CD4-positive, alpha-beta T cell (primary cell): ENCODE measurements at regions of chr19 and their contacts with region 1.

Region 1: GRCh38 chr19:44093931-44094765 is at the start of gene ZNF224:
- DNase-seq: peak; percentile 62 to 92 (median 74)
- ATAC-seq: peak; percentile 88
- H3K4me3 ChIP-seq: peak within 1 kb of the TSS; percentile 91
- H3K4me3 Mint-ChIP-seq: peak within 1 kb of the TSS; percentile 96
- H3K27ac ChIP-seq: peak within 1 kb of the TSS; percentile 30 to 79
- H3K27ac Mint-ChIP-seq: peak within 1 kb of the TSS; percentile 69
- H3K4me1 ChIP-seq: peaks cover 6% of the 10 kb centered on the region
- H3K4me1 Mint-ChIP-seq: peaks cover 24% of the 10 kb centered on the region
- H3K27me3 ChIP-seq: no peaks in the 10 kb centered on the region
- H3K27me3 Mint-ChIP-seq: no peaks in the 10 kb centered on the region
- CTCF ChIP-seq: no peak
- total RNA-seq, gene ZNF224: 21.3 to 23.9 TPM

Region 2: DNA sequence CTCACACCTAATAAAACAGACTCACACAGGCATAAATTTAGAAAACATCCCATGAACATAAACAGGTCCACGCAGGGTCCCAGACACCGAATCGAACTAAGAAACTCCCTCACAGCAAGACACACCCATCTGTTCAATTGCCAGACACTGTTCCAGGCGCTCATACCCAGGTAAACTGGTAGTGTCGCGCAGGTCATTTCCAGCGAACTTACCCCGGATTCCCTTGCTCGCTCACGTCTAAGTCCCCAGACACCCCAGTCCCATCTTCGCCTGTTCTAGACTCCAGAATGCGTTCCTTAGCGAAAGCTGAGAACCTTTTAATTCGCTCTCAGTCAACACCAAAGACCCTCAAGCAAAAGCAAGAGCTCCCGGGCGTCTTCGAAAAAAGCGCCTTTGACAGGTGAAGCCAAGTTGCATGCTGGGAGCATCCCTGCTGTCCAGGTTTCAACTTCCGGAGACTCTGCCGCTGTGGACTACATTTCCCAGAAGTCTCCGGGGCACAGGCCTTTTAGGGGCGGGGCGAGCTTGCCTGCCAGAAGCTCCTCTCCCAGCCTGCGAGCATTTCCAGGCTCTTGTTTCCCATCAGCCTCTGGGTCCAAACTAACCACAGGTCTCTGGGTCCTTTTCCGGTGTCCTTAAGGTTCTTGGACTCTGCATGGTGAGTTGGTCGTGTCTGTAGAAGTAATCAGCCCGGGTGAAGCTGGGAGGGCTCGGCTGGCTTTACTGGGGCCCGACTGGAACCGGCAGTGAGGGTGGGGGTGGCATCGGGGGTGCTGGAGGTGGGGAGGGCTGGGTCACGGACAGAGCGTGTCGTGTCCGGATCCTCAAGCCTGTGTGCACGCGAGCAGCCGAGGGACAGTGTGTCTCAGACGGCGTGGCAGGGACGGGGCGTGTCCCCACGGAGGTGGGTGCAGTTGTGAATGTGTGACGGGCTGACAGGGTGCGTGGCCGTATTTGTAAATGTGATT is 267.1 kb before region 1 on chr19 and contains the start of gene ZNF283:
- CTCF ChIA-PET with region 1: no interaction called
- POLR2A ChIA-PET with region 1: no interaction called
- intact Hi-C with region 1: loop called in 1 of 2 experiments (anchors 5 kb)
- DNase-seq: peak; percentile 63 to 89 (median 79)
- ATAC-seq: peak; percentile 95
- H3K4me3 ChIP-seq: peak within 1 kb of the TSS; percentile 77
- H3K4me3 Mint-ChIP-seq: peak within 1 kb of the TSS; percentile 84
- H3K27ac ChIP-seq: no peak within 1 kb of the TSS
- H3K27ac Mint-ChIP-seq: peak within 1 kb of the TSS; percentile 12
- H3K4me1 ChIP-seq: peaks cover 16% of the 10 kb centered on the region
- H3K4me1 Mint-ChIP-seq: peaks cover 18% of the 10 kb centered on the region
- H3K27me3 ChIP-seq: no peaks in the 10 kb centered on the region
- H3K27me3 Mint-ChIP-seq: peaks cover 14% of the 10 kb centered on the region
- CTCF ChIP-seq: no peak
- total RNA-seq, gene ZNF283: 2.3 to 3.7 TPM

Region 3: GRCh38 chr19:43983912-43984686 is 110.0 kb before region 1 on chr19 and contains the start of gene ZNF155:
- CTCF ChIA-PET with region 1: no interaction called
- POLR2A ChIA-PET with region 1: no interaction called
- intact Hi-C with region 1: loop called in 1 of 2 experiments (anchors 5 kb)
- DNase-seq: peak; percentile 39 to 88 (median 56)
- ATAC-seq: peak; percentile 88
- H3K4me3 ChIP-seq: peak within 1 kb of the TSS; percentile 85
- H3K4me3 Mint-ChIP-seq: peak within 1 kb of the TSS; percentile 97
- H3K27ac ChIP-seq: peak within 1 kb of the TSS in 1 of 2 donors; percentile 72
- H3K27ac Mint-ChIP-seq: peak within 1 kb of the TSS; percentile 83
- H3K4me1 ChIP-seq: peaks cover 16% of the 10 kb centered on the region
- H3K4me1 Mint-ChIP-seq: peaks cover 22% of the 10 kb centered on the region
- H3K27me3 ChIP-seq: no peaks in the 10 kb centered on the region
- H3K27me3 Mint-ChIP-seq: no peaks in the 10 kb centered on the region
- CTCF ChIP-seq: no peak
- total RNA-seq, gene ZNF155: 3.5 to 4.0 TPM

Region 4: DNA sequence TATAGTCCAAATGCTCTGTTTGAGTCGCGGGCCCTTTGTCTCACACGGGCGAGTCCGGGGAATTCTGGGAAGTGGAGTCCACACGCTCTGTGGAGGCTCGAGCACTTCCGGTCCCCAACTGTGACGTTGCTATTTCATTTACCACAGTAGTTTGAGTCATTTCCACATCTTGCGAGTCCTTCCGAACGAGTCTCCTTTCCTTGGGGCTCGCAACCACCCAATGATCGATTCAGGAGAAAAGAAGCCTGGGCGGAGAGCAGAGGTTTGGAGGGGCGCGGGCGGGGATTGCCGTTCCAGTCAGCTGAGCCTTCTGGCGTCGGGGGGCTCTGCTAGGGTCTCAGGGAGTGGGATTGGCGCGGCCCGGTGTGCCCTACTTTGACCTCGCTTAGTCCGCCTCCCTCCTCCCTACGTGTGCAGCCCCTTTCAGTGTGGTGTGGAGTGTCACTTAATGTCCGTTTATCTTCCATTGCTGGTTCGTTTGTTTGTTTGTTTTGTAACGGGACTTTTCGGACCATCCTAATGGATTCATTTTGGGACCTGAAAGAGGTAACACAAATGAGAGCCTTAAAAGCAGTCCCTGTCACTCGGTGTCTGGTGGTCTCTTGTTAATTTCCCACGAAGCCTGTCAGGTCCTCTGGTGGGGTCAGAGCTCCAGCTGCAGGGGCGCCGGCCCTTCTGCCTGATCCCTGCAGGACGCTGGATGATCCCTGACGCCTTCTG is 68.8 kb before region 1 on chr19 and contains the start of gene ZNF222:
- CTCF ChIA-PET with region 1: no interaction called
- POLR2A ChIA-PET with region 1: no interaction called
- intact Hi-C with region 1: loop called in 1 of 2 experiments (anchors 2 kb)
- DNase-seq: peak; percentile 53 to 90 (median 70)
- ATAC-seq: peak; percentile 97
- H3K4me3 ChIP-seq: peak within 1 kb of the TSS; percentile 79
- H3K4me3 Mint-ChIP-seq: peak within 1 kb of the TSS; percentile 98
- H3K27ac ChIP-seq: no peak within 1 kb of the TSS
- H3K27ac Mint-ChIP-seq: peak within 1 kb of the TSS; percentile 88
- H3K4me1 ChIP-seq: peaks cover 14% of the 10 kb centered on the region
- H3K4me1 Mint-ChIP-seq: peaks cover 30% of the 10 kb centered on the region
- H3K27me3 ChIP-seq: no peaks in the 10 kb centered on the region
- H3K27me3 Mint-ChIP-seq: peaks cover 9% of the 10 kb centered on the region
- CTCF ChIP-seq: no peak
- total RNA-seq, gene ZNF222: 4.5 to 5.8 TPM

Region 5: GRCh38 chr19:44061038-44061437 is 33.1 kb before region 1 on chr19:
- CTCF ChIA-PET with region 1: no interaction called
- POLR2A ChIA-PET with region 1: no interaction called
- intact Hi-C with region 1: no loop called
- DNase-seq: no peak
- ATAC-seq: no peak
- H3K4me3 ChIP-seq: no peak overlapping the region
- H3K4me3 Mint-ChIP-seq: no peak overlapping the region
- H3K27ac ChIP-seq: no peak overlapping the region
- H3K27ac Mint-ChIP-seq: no peak overlapping the region
- H3K4me1 ChIP-seq: no peaks in the 10 kb centered on the region
- H3K4me1 Mint-ChIP-seq: no peaks in the 10 kb centered on the region
- H3K27me3 ChIP-seq: no peaks in the 10 kb centered on the region
- H3K27me3 Mint-ChIP-seq: no peaks in the 10 kb centered on the region
- CTCF ChIP-seq: no peak

Region 6: GRCh38 chr19:44071824-44072542 is 22.2 kb before region 1 on chr19 and contains the start of gene ZNF284:
- CTCF ChIA-PET with region 1: interaction called, 5 read pairs
- POLR2A ChIA-PET with region 1: interaction called, 10 read pairs
- intact Hi-C with region 1: loop called (anchors 1 kb)
- DNase-seq: peak; percentile 65 to 93 (median 78)
- ATAC-seq: peak; percentile 98
- H3K4me3 ChIP-seq: peak within 1 kb of the TSS; percentile 78
- H3K4me3 Mint-ChIP-seq: peak within 1 kb of the TSS; percentile 90
- H3K27ac ChIP-seq: peak within 1 kb of the TSS; percentile 39 to 43
- H3K27ac Mint-ChIP-seq: peak within 1 kb of the TSS; percentile 79
- H3K4me1 ChIP-seq: peaks cover 18% of the 10 kb centered on the region
- H3K4me1 Mint-ChIP-seq: peaks cover 24% of the 10 kb centered on the region
- H3K27me3 ChIP-seq: no peaks in the 10 kb centered on the region
- H3K27me3 Mint-ChIP-seq: no peaks in the 10 kb centered on the region
- CTCF ChIP-seq: no peak
- total RNA-seq, gene ZNF284: 0.92 to 1.2 TPM

Region 7: DNA sequence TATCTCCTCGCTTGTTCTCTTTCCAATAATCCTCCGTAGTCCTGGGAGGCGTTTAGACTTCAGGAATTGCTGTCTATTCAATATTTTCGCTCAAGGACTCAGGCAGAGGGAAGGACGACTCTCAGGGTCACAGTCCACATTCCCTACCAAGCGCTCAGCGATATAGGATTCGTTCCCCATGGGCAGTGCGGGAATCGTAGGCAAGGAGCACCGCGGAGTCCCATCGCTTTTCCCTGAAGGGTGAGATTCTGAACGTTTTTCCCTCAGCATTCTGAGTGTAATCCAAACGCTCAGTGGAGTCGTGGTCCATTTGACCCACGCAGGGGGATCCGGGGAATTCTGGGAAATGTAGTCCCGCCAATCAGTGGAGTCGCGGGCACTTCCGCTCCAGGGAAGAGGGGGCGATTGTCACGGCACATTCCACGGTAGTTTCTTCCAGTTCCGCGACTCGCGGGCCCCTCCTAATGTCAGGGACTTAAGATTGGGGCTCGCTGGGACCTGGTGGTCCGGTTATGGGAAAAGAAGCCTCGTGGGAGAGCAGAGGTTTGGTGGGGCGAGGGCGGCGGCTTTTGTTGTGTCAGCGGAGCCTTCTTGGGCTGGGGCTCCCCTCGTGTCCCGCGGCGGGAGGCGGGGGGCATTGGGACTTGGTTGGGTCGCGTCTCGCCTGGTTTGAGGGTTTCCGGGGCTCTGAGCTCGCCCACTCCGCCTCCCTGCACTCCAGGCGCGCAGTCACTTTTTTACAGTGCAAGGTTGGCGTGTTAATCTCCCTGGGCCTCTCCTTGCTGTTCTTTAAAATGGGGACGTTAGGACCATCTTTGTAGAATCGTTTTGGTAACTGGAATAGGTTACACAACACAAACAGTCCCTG is 47.3 kb after region 1 on chr19 and contains the start of gene ZNF234:
- CTCF ChIA-PET with region 1: interaction called, 3 read pairs
- POLR2A ChIA-PET with region 1: interaction called, 3 read pairs
- intact Hi-C with region 1: loop called in 1 of 2 experiments (anchors 5 kb)
- DNase-seq: peak; percentile 35 to 84 (median 57)
- ATAC-seq: peak; percentile 86
- H3K4me3 ChIP-seq: peak within 1 kb of the TSS; percentile 84
- H3K4me3 Mint-ChIP-seq: peak within 1 kb of the TSS; percentile 92
- H3K27ac ChIP-seq: peak within 1 kb of the TSS; percentile 16 to 61
- H3K27ac Mint-ChIP-seq: peak within 1 kb of the TSS; percentile 79
- H3K4me1 ChIP-seq: peaks cover 13% of the 10 kb centered on the region
- H3K4me1 Mint-ChIP-seq: peaks cover 25% of the 10 kb centered on the region
- H3K27me3 ChIP-seq: no peaks in the 10 kb centered on the region
- H3K27me3 Mint-ChIP-seq: no peaks in the 10 kb centered on the region
- CTCF ChIP-seq: no peak
- total RNA-seq, gene ZNF234: 1.4 to 1.6 TPM

Region 8: DNA sequence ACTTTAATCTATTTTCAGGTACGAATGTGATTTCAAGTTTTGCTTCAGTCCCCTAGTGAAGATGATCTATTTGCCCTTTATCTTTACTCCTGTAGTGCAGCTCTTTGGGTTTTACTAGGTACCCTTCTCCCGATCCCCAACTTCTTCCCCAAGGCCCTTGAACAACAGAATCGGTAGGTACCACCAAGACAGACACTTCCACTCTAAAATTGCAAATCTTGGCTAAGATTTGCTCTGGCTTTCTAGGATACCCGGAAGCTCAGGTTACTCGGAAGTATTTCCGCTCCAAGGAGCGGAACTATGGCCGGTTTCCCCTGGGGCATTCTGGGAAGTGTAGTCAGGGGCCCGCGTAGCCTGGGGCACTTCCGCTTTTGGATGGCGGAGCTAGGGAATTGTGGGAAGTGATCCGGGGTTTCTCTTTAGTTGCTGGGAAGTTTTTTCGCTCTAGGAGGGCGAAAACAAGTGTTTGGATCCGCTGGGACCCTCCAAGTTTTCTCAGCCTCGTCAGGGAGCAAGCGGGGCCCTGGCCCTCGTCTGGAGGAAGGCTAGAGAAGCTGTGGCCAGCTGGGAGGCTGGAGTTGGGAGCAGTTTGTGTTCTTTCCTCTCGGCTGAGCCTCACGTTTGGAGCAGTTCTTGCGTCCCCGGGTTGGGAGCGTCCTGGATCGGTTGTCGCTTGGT is 113.1 kb after region 1 on chr19:
- CTCF ChIA-PET with region 1: no interaction called
- POLR2A ChIA-PET with region 1: interaction called, 11 read pairs
- intact Hi-C with region 1: loop called in 1 of 2 experiments (anchors 5 kb)
- DNase-seq: peak; percentile 51 to 91 (median 71)
- ATAC-seq: peak; percentile 81
- H3K4me3 ChIP-seq: peak overlapping the region; percentile 85
- H3K4me3 Mint-ChIP-seq: peak overlapping the region; percentile 78
- H3K27ac ChIP-seq: peak overlapping the region; percentile 64 to 76
- H3K27ac Mint-ChIP-seq: peak overlapping the region; percentile 67
- H3K4me1 ChIP-seq: peaks cover 10% of the 10 kb centered on the region
- H3K4me1 Mint-ChIP-seq: peaks cover 14% of the 10 kb centered on the region
- H3K27me3 ChIP-seq: peaks cover 0 to 7% of the 10 kb centered on the region in 2 experiments
- H3K27me3 Mint-ChIP-seq: peaks cover 10% of the 10 kb centered on the region
- CTCF ChIP-seq: no peak